Left ventricle myocardium inferior (tissue), 1 donor: ENCODE measurements at regions of chr6 and their contacts with region 1.

Region 1: DNA sequence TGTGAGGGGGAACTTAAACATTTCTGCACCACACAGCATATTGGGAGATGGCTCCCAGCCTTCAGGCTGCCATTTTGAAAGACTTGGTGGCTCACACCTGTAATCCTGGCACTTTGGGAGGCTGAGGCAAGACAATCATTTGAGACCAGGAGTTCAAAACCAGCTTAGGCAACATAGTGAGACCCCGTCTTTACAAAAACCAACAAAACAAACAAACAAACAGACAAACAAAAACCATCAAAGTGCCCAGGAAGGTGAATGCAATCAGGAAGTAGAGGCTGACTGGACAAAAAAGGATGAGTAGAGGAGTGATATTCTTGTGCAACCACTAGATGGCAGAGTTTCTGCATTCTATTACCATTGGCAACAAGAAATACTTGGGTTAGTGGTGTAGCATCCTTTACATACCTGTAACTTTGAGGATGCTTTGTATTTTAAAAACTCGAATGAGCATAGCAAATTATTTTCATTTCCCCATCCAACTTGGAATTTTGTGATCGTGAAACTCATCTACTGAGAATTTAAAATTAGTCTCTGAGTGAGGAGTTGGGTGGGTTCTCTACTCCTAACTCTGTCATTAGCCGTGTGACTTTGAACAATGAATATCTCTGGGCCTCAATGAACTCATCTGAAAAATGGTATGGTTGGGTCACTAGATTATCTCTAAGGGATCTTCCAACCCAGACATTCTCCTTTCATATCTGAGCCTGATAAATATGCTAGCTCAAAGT is 84.4 kb downstream of the CRYBG1 start:
- DNase-seq: no peak
- H3K4me3 ChIP-seq: no peak overlapping the region
- H3K27ac ChIP-seq: no peak overlapping the region
- H3K4me1 ChIP-seq: peaks cover 8% of the 10 kb centered on the region
- H3K27me3 ChIP-seq: peaks cover 45% of the 10 kb centered on the region
- CTCF ChIP-seq: peak; percentile 83

Region 2: GRCh38 chr6:106568530-106568929 is 123.6 kb after region 1 on chr6:
- intact Hi-C with region 1: loop called (anchors 5 kb)
- DNase-seq: no peak
- H3K4me3 ChIP-seq: no peak overlapping the region
- H3K27ac ChIP-seq: no peak overlapping the region
- H3K4me1 ChIP-seq: peaks cover 13% of the 10 kb centered on the region
- H3K27me3 ChIP-seq: no peaks in the 10 kb centered on the region
- CTCF ChIP-seq: no peak

Region 3: DNA sequence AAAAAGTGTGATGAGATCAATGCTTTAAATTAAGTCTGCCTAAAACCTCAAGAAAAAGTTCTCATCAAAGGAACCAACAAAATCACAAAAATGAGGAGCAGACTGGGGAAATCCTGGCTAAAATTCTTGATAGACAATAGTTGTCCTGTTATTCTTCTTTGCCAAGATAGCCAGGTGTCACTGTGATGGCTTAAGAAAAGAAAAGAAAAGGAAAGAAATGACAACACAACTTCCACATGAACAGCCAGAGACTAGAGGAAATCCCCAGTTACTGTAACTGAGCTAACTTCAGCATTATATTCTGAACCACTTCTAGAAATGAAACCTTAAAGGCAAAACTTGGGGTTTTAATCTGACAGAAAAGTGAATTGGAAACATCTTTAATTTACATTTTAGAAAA is 400.0 kb after region 1 on chr6:
- intact Hi-C with region 1: no loop called
- DNase-seq: no peak
- H3K4me3 ChIP-seq: no peak overlapping the region
- H3K27ac ChIP-seq: no peak overlapping the region
- H3K4me1 ChIP-seq: no peaks in the 10 kb centered on the region
- H3K27me3 ChIP-seq: peaks cover 39% of the 10 kb centered on the region
- CTCF ChIP-seq: no peak

Region 4: GRCh38 chr6:106979427-106979884 is 534.5 kb after region 1 on chr6:
- intact Hi-C with region 1: loop called (anchors 10 kb)
- DNase-seq: peak; percentile 84
- H3K4me3 ChIP-seq: no peak overlapping the region
- H3K27ac ChIP-seq: no peak overlapping the region
- H3K4me1 ChIP-seq: peaks cover 11% of the 10 kb centered on the region
- H3K27me3 ChIP-seq: peaks cover 99% of the 10 kb centered on the region
- CTCF ChIP-seq: peak; percentile 96